Transverse colon (tissue), 4 donors: ENCODE measurements at regions of chr11 and their contacts with region 1.

Region 1: DNA sequence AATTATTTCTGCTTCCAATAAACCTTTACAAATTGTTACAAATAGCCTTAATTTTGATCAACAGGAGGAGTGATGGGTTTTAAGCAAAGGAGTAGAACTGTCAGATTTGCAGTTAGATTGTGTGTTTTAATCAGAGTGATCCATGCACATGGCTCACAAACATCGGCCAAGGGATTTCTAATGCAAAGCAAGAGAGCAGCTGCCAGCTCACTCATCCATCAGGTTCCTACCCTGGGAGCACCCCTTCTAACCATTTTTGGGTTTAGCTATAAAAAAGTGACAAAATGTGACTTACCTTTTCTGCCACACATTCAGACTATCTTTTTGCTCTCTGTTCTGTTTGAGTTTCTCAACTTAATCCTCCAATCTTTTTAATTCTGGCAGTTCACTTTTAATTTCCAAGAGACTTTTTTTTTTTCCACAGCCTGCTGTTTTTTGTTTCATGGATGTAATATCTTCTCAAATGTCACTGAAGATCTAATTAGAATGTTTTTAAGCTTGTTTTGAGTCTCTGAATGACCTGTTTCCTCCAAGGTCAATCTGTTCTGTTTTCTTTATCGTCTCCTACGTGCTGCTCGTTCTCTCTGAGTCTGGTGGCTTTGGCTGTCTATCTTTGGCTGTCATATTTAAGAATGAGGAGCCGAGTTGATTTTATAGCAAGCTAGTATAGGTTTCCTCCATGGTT is 6.0 kb downstream of the IZUMO1R start:
- DNase-seq: no peak
- H3K4me3 ChIP-seq: no peak overlapping the region
- H3K27ac ChIP-seq: no peak overlapping the region
- H3K4me1 ChIP-seq: no peaks in the 10 kb centered on the region
- H3K27me3 ChIP-seq: no peaks in the 10 kb centered on the region
- CTCF ChIP-seq: no peak
- EP300 ChIP-seq: no peak
- POLR2A ChIP-seq: no peak

Region 2: GRCh38 chr11:94128746-94129511 is 181.4 kb before region 1 on chr11 and contains the start of gene PANX1:
- in situ Hi-C with region 1: no loop called
- intact Hi-C with region 1: no loop called
- DNase-seq: peak; percentile 80
- H3K4me3 ChIP-seq: peak within 1 kb of the TSS; percentile 77 to 87 (median 84)
- H3K27ac ChIP-seq: peak within 1 kb of the TSS; percentile 93 to 99 (median 96)
- H3K4me1 ChIP-seq: peaks cover 9 to 34% (median 28%) of the 10 kb centered on the region in 4 donors
- H3K27me3 ChIP-seq: no peaks in the 10 kb centered on the region
- CTCF ChIP-seq: no peak
- EP300 ChIP-seq: peak; percentile 46
- POLR2A ChIP-seq: peak; percentile 58
- total RNA-seq, gene PANX1: 9.0 to 20.1 (median 11.3) TPM

Region 3: DNA sequence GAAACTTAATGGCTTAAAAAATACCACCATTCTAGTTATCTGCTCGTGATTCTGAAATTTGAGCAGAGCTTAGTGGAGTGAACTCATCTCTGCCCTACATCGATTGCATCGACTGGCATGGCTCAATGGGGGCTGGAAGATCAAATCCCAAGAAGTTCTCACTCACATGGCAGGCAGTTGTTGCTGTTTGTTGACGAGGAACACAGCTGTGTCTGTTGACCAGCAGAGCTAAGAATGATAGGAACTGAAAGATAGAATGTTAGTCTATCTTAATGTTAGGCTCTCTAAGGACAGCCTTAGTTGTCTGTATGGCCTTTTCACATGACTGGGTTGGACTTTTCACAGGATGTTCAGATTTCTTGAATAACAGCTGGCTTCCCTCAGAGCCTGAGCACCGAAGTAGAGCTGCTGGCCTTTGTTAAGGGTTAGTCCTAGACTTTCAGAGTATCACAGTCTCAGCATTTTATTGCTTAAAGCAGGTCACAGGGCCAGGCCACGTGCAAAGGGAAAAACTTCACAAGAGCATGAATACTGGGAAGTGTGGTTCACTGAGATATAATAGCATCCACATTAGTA is 37.5 kb before region 1 on chr11:
- in situ Hi-C with region 1: no loop called
- intact Hi-C with region 1: loop called (anchors 1 kb)
- DNase-seq: no peak
- H3K4me3 ChIP-seq: no peak overlapping the region
- H3K27ac ChIP-seq: no peak overlapping the region
- H3K4me1 ChIP-seq: no peaks in the 10 kb centered on the region
- H3K27me3 ChIP-seq: no peaks in the 10 kb centered on the region
- CTCF ChIP-seq: no peak
- EP300 ChIP-seq: no peak
- POLR2A ChIP-seq: no peak